ENCODE measurements at regions of chr5 and their contacts with region 1.

Region 1: GRCh38 chr5:178075840-178076548 is 37.3 kb upstream of the N4BP3 start:
- DNase-seq: peak; percentile 69 to 91 (median 81)
- ATAC-seq: peak; percentile 96 to 97
- H3K4me3 Mint-ChIP-seq: peak overlapping the region; percentile 16 to 73 (median 55)
- H3K27ac Mint-ChIP-seq: peak overlapping the region in 2 of 10 donors; percentile 6 to 74
- H3K4me1 Mint-ChIP-seq: peaks cover 0 to 6% (median 4%) of the 10 kb centered on the region in 4 donors
- H3K27me3 Mint-ChIP-seq: peaks cover 0 to 4% (median 0%) of the 10 kb centered on the region in 5 donors

Region 2: DNA sequence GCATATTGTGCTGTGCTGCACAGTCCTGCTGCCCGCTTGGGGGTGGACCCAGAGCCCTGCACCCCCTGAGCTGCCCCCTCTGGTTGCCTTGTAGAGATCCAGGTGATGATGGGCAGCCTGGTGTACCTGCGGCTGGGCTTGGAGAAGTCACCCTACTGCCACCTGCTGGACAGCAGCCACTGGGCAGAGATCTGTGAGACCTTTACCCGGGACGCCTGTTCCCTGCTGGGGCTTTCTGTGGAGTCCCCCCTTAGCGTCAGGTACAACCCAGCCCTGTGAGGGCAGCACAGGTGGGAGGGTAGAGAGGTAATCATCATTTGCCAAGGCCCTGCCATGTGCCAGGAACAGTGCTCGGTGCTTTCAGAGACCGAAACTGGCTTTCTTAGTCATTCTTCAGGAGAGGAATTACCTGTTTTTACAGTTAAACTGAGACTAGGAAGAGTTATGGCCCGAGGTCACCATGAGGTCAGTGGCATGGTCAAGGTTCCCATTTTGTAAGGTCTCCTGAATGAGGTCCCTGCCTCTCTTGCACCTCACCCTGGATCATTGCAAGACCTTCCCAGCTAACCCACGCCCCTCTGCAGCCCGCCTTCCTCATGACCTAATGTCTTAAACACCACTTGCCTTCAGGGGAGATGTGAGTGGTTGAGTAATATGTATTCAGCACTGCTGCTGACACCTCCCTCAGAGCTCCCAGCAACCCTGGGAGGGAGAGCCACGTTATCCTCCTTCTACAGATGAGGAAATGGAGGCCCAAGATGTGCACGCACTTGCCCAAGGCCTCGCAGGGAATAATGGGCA is 70.2 kb after region 1 on chr5:
- POLR2A ChIA-PET with region 1: interaction called, 12 read pairs
- DNase-seq: peak; percentile 65 to 89 (median 74)
- ATAC-seq: peak; percentile 96 to 99
- H3K4me3 Mint-ChIP-seq: no peak overlapping the region
- H3K27ac Mint-ChIP-seq: peak overlapping the region in 4 of 10 donors; percentile 48 to 91 (median 61)
- H3K4me1 Mint-ChIP-seq: peaks cover 7 to 28% (median 13%) of the 10 kb centered on the region in 4 donors
- H3K27me3 Mint-ChIP-seq: no peaks in the 10 kb centered on the region